Heart right ventricle (tissue), 16 donors: ENCODE measurements at regions of chr1 and their contacts with region 1.

Region 1: GRCh38 chr1:25695090-25695770 is 78.6 kb downstream of the MAN1C1 start:
- DNase-seq: peak; percentile 75 to 82
- ATAC-seq: peak; percentile 76 to 90 (median 86)
- H3K4me3 ChIP-seq: no peak overlapping the region
- H3K27ac ChIP-seq: peak overlapping the region in 9 of 10 donors; percentile 76 to 96 (median 90)
- H3K4me1 ChIP-seq: peaks cover 7 to 80% (median 57%) of the 10 kb centered on the region in 9 donors
- H3K27me3 ChIP-seq: no peaks in the 10 kb centered on the region
- CTCF ChIP-seq: peak in 7 of 9 donors; percentile 17 to 56 (median 38)

Region 2: GRCh38 chr1:25543425-25544242 is 151.6 kb before region 1 on chr1 and contains the start of gene LDLRAP1:
- intact Hi-C with region 1: loop called in 1 of 10 experiments (anchors 5 kb)
- DNase-seq: peak; percentile 69 to 84
- ATAC-seq: peak; percentile 92 to 98 (median 96)
- H3K4me3 ChIP-seq: peak within 1 kb of the TSS; percentile 81 to 99 (median 93)
- H3K27ac ChIP-seq: peak within 1 kb of the TSS; percentile 71 to 96 (median 90)
- H3K4me1 ChIP-seq: peaks cover 9 to 57% (median 28%) of the 10 kb centered on the region in 9 donors
- H3K27me3 ChIP-seq: no peaks in the 10 kb centered on the region
- CTCF ChIP-seq: peak in 2 of 9 donors; percentile 11 to 22
- total RNA-seq, gene LDLRAP1: 8.5 to 16.1 (median 11.6) TPM

Region 3: GRCh38 chr1:25658791-25659431 is 36.3 kb before region 1 on chr1:
- intact Hi-C with region 1: loop called in 2 of 10 experiments (anchors 5 kb)
- DNase-seq: peak; percentile 65 to 78
- ATAC-seq: peak; percentile 79 to 96 (median 93)
- H3K4me3 ChIP-seq: no peak overlapping the region
- H3K27ac ChIP-seq: peak overlapping the region in 9 of 10 donors; percentile 12 to 82 (median 67)
- H3K4me1 ChIP-seq: peaks cover 13 to 83% (median 42%) of the 10 kb centered on the region in 9 donors
- H3K27me3 ChIP-seq: no peaks in the 10 kb centered on the region
- CTCF ChIP-seq: no peak

Region 4: GRCh38 chr1:25737130-25737529 is 41.9 kb after region 1 on chr1:
- intact Hi-C with region 1: loop called in 6 of 10 experiments (anchors 5 kb)
- DNase-seq: peak in 1 of 2 donors; percentile 19
- ATAC-seq: peak in 7 of 8 donors; percentile 32 to 68 (median 50)
- H3K4me3 ChIP-seq: no peak overlapping the region
- H3K27ac ChIP-seq: peak overlapping the region in 8 of 10 donors; percentile 23 to 77 (median 42)
- H3K4me1 ChIP-seq: peaks cover 5 to 57% (median 14%) of the 10 kb centered on the region in 9 donors
- H3K27me3 ChIP-seq: no peaks in the 10 kb centered on the region
- CTCF ChIP-seq: no peak

Region 5: DNA sequence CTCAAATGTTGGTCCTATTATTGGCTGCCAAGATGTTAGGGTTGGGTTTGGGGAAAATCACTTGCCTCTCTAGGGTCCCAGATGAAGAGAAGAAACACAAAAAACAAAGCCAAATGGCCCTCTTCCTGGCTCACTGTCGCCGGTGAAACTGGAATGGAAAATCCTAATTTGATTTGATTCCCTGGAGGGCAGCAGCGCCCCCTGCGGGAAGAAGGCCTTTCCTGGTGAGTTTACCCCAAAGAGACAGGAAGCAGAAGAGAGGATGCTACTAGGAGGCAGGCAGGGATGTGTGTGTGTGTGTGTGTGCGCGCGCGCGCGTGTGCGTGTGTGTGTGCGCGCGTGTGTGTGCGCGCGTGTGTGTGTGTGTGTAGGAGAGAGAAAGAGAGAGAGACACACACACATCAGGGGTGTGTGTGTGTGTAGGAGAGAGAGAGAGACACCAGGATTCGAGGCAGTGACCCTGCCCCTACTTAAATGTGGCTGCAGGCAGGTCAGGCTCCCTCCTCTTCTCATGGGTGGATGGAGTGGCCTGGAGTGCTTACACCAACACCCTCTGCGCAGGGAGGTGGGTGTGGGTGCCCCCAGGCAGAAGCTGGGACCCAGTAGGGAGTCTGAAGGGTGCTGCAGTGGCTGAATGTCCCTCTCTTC is 101.7 kb after region 1 on chr1:
- intact Hi-C with region 1: loop called in 5 of 10 experiments (anchors 5 to 10 kb)
- DNase-seq: peak; percentile 89 to 90
- ATAC-seq: peak in 7 of 8 donors; percentile 16 to 48 (median 38)
- H3K4me3 ChIP-seq: no peak overlapping the region
- H3K27ac ChIP-seq: peak overlapping the region in 7 of 10 donors; percentile 27 to 58 (median 43)
- H3K4me1 ChIP-seq: peaks cover 19 to 62% (median 39%) of the 10 kb centered on the region in 9 donors
- H3K27me3 ChIP-seq: no peaks in the 10 kb centered on the region
- CTCF ChIP-seq: peak; percentile 69 to 81 (median 76)